AG04449 (cell line): ENCODE measurements at regions of chr4 and their contacts with region 1.

Region 1: GRCh38 chr4:56424697-56425514 is 10.5 kb downstream of the PPAT start:
- DNase-seq: no peak
- H3K4me3 ChIP-seq: no peak overlapping the region
- CTCF ChIP-seq: peak; percentile 41

Region 2: DNA sequence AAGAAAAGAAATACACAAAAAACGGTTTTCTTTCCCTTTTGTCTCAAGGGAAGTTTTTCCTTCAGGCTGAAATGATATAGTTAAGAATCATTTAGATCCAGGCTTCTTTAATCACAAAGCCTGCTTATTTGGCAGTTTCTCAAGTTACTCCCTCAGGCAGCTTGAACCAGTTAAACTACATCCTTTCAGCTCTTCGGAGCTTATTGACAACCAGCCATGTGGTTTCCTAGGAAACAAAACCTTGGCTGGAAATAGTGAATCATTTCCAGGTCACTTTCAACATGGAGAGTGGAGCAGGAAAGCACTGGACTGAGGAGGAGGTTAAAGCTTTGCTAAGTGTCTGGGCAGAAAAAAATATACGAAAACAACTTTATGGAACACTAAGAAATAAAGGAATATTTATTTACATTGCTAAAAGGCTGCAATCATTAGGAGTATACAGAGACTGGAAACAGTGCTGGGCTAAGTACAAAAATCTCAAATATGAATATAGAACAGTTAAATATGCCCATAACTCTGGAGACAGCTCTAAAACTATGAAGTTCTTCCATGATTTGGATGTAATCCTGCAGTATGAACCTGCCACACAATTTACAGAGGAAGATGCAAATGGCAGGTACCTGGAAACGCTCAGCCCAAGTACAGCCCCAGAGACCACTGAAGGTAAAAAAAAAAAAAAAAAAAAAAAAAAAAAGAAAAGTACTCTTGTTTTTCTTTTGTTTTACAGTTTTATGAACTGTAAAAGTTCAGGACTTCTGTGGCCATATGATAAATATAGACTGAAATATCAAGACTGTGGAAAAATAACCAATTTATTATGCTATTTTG is 14.5 kb before region 1 on chr4:
- CTCF ChIA-PET with region 1: interaction called, 39 read pairs
- POLR2A ChIA-PET with region 1: no interaction called
- DNase-seq: peak; percentile 83
- H3K4me3 ChIP-seq: peak overlapping the region; percentile 40
- CTCF ChIP-seq: no peak

Region 3: GRCh38 chr4:56435306-56435926 is 10.5 kb after region 1 on chr4 and contains the start of gene PPAT:
- CTCF ChIA-PET with region 1: interaction called, 96 read pairs
- POLR2A ChIA-PET with region 1: no interaction called
- DNase-seq: peak; percentile 69
- H3K4me3 ChIP-seq: peak within 1 kb of the TSS; percentile 93
- CTCF ChIP-seq: peak; percentile 46

Region 4: DNA sequence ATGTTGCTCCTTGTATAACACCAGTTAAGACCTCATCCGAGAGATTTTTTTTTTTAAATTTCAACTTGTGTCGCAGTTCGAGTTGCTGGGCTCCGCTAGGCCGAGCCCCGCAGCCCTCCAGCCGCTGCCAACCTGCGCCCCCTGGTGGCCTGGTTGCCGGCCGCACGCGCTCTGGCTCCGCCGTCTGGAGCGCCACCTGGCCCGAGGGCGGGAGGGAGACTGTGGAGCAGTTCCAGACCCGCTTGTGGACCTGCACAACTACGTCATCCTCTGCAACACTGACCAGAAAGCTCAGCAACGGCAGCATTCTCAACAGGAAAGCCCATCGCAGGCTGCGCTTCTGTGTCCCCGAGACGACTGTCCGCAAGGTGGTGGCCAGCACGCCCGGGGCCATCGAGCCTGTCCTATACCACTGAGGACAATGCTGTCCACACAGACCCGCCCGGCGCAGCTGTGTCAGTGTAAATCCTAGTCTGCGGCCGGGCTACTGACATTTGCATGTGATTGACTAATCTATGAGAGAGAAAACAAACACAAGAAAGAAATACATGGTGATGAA is 119.7 kb after region 1 on chr4:
- CTCF ChIA-PET with region 1: interaction called, 35 read pairs
- POLR2A ChIA-PET with region 1: no interaction called
- DNase-seq: no peak
- H3K4me3 ChIP-seq: peak overlapping the region; percentile 50
- CTCF ChIP-seq: peak; percentile 99

Region 5: DNA sequence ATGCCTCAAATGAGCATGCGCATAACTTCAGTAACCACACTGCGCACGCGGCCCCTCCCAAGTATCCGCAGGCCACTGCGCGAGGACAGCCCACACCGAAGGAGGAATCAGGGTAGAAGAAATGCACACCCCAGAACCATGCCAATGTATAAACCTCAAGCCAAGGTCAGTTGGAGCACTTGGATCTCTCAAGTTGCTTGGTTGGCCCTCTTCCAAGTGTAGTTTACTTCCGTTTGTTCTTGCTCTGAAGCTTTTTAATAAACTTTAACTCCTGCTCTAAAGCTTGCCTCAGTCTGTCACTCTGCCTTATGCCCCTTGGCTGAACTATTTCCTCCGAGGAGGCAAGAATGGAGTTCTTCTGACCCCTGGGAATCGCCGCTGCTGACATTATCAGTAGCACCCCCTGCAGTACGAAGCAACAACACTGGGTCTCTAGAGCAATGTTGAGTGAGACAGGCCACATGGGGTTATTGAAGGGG is 418.6 kb after region 1 on chr4:
- CTCF ChIA-PET with region 1: interaction called, 110 read pairs
- POLR2A ChIA-PET with region 1: no interaction called
- DNase-seq: no peak
- H3K4me3 ChIP-seq: no peak overlapping the region
- CTCF ChIP-seq: no peak